H1 (cell line): ENCODE measurements at regions of chr7 and their contacts with region 1.

Region 1: GRCh38 chr7:123580406-123581161 is 21.0 kb upstream of the ASB15 start:
- DNase-seq: no peak
- H3K4me3 ChIP-seq: no peak overlapping the region
- H3K27ac ChIP-seq: no peak overlapping the region
- H3K4me1 ChIP-seq: peaks cover 0 to 3% (median 0%) of the 10 kb centered on the region in 4 experiments; a peak in 4 of 7 replicates
- H3K27me3 ChIP-seq: no peaks in the 10 kb centered on the region
- CTCF ChIP-seq: peak in 2 of 3 experiments; percentile 77 to 86; a peak in 3 of 4 replicates
- EP300 ChIP-seq: no peak
- POLR2A ChIP-seq: no peak
- RAD21 ChIP-seq: peak; percentile 90

Region 2: GRCh38 chr7:123594813-123595241 is 14.2 kb after region 1 on chr7:
- CTCF ChIA-PET with region 1: interaction called, 17 read pairs
- POLR2A ChIA-PET with region 1: interaction called, 3 read pairs
- DNase-seq: peak; percentile 46 to 64
- H3K4me3 ChIP-seq: peak overlapping the region in 1 of 4 experiments; percentile 4; a peak in 1 of 8 replicates
- H3K27ac ChIP-seq: no peak overlapping the region; the same call in 1 of the 2 replicates
- H3K4me1 ChIP-seq: peaks cover 3 to 8% (median 5%) of the 10 kb centered on the region in 4 experiments
- H3K27me3 ChIP-seq: no peaks in the 10 kb centered on the region
- CTCF ChIP-seq: no peak; a peak in 1 of 4 replicates
- EP300 ChIP-seq: no peak
- POLR2A ChIP-seq: 0 out of 3 replicates have a peak, but pooled peaks of 1 of the 2 experiments have one; percentile 24
- RAD21 ChIP-seq: peak in 1 of 2 experiments; percentile 6; a peak in 1 of 4 replicates

Region 3: GRCh38 chr7:123682690-123683089 is 102.1 kb after region 1 on chr7:
- CTCF ChIA-PET with region 1: interaction called, 14 read pairs
- POLR2A ChIA-PET with region 1: no interaction called
- DNase-seq: no peak
- H3K4me3 ChIP-seq: no peak overlapping the region
- H3K27ac ChIP-seq: no peak overlapping the region
- H3K4me1 ChIP-seq: no peaks in the 10 kb centered on the region
- H3K27me3 ChIP-seq: peaks cover 0 to 1% (median 0%) of the 10 kb centered on the region in 4 experiments; a peak in 1 of 7 replicates
- CTCF ChIP-seq: peak in 2 of 3 experiments; percentile 38 to 40; a peak in 2 of 4 replicates
- EP300 ChIP-seq: no peak
- POLR2A ChIP-seq: no peak
- RAD21 ChIP-seq: peak; percentile 63 to 67